Caco-2 (cell line): ENCODE measurements at regions of chr2 and their contacts with region 1.

Region 1: DNA sequence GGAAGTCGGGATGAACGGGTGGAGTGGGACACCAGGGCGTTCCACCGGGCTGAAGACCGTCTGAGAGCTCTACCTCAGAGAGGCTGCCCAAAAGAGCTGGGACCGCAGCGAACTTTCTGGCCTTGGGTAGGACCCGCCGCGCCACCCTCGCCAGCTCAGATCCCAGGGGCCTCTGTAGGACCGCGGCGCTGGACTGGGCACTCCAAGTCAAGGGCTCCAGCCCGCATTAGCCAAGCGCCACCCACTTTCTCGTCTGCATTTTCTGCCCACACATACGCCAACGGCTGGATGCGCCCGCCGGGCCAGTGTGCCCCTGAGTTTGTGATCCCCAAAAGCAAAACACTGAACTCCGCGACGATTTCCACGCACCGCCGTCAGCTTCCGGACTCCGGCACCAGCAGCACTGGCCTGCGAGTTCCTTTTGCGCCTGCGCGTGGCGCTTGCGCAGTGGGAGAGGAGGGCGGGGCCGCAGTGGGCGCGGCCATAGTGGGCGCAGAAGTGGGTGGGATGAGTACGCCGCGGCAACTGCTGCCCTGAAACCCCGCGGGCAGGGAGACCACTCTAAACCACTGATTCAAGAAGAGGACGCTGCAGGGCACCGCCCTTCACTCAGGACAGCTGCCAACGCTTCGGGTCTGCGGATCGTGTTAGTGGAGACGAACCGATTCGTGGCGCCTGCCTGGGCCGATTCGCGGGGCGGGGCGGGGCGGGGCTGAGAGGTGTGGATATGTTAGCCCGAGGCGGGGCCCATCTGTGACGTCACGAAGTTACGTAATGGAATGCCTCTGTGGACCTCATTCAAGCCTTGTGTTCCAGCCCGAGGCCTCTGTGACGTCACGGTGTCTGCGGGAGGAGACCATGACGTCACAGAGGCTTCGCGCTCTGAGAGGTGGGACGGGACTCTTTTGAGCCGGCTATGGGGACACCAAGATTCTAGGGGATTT is 10.5 kb downstream of the OSR1 start:
- DNase-seq: peak; percentile 97 to 98
- H3K4me3 ChIP-seq: peak overlapping the region; percentile 88
- H3K4me3 Mint-ChIP-seq: peak overlapping the region; percentile 98
- H3K27ac Mint-ChIP-seq: peak overlapping the region; percentile 98
- H3K4me1 ChIP-seq: no peaks in the 10 kb centered on the region
- H3K4me1 Mint-ChIP-seq: no peaks in the 10 kb centered on the region
- H3K27me3 ChIP-seq: no peaks in the 10 kb centered on the region
- H3K27me3 Mint-ChIP-seq: no peaks in the 10 kb centered on the region
- CTCF ChIP-seq: no peak

Region 2: DNA sequence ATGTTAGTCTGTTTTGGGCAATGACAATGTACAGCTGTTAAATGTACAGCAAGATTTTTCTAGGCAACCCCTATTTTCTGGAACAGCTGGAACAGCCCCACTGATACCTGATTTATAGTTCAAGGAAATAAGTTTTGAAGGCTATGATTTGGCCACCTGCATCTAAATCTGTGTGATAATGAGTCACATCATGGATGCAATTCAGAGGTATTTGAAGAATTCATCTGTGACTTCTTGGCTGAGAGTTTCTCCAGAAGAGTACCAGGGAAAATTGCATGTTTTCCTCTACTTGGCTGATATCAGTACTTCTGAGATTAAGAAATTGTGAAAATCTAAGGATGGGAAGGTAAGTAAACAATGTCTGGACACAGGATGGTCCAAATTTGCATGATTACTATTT is 717.8 kb before region 1 on chr2:
- CTCF ChIA-PET with region 1: interaction called, 10 read pairs
- POLR2A ChIA-PET with region 1: no interaction called
- intact Hi-C with region 1: no loop called
- DNase-seq: no peak
- H3K4me3 ChIP-seq: no peak overlapping the region
- H3K4me3 Mint-ChIP-seq: no peak overlapping the region
- H3K27ac Mint-ChIP-seq: no peak overlapping the region
- H3K4me1 ChIP-seq: no peaks in the 10 kb centered on the region
- H3K4me1 Mint-ChIP-seq: no peaks in the 10 kb centered on the region
- H3K27me3 ChIP-seq: no peaks in the 10 kb centered on the region
- H3K27me3 Mint-ChIP-seq: no peaks in the 10 kb centered on the region
- CTCF ChIP-seq: no peak

Region 3: DNA sequence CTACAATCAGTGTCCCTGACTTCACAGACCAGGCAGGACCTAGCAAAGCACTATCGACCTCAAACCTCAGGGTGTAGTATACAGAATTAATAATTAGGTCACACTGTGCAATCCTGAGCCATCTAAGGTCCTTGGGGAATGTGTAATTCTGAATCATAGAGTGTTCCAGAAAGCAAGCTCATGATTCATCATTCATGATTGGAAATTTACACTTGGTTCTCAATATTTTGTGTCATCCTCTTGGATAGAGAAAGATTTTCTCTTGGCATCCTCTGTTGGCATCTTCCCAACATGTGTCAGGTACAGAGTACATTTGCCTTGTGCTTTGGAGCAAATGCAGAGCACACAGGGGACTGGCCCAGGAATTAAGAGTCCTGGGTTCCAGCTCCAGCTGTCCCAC is 513.5 kb before region 1 on chr2:
- CTCF ChIA-PET with region 1: no interaction called
- POLR2A ChIA-PET with region 1: no interaction called
- intact Hi-C with region 1: loop called (anchors 5 kb)
- DNase-seq: no peak
- H3K4me3 ChIP-seq: no peak overlapping the region
- H3K4me3 Mint-ChIP-seq: no peak overlapping the region
- H3K27ac Mint-ChIP-seq: no peak overlapping the region
- H3K4me1 ChIP-seq: peaks cover 47% of the 10 kb centered on the region
- H3K4me1 Mint-ChIP-seq: peaks cover 30% of the 10 kb centered on the region
- H3K27me3 ChIP-seq: no peaks in the 10 kb centered on the region
- H3K27me3 Mint-ChIP-seq: no peaks in the 10 kb centered on the region
- CTCF ChIP-seq: no peak